ENCODE measurements at regions of chr6 and their contacts with region 1.

Region 1: GRCh38 chr6:80133020-80133419 is 26.5 kb downstream of the BCKDHB start:
- DNase-seq: peak; percentile 47
- ATAC-seq: peak; percentile 51; the same call in 1 of the 2 replicates
- H3K4me3 ChIP-seq: no peak overlapping the region
- H3K27ac ChIP-seq: no peak overlapping the region
- H3K4me1 ChIP-seq: peaks cover 6 to 9% of the 10 kb centered on the region in 2 experiments
- H3K27me3 ChIP-seq: no peaks in the 10 kb centered on the region
- CTCF ChIP-seq: peak; percentile 28 to 64 (median 54); a peak in 4 of 6 replicates
- POLR2A ChIP-seq: no peak
- RAD21 ChIP-seq: peak; percentile 84

Region 2: DNA sequence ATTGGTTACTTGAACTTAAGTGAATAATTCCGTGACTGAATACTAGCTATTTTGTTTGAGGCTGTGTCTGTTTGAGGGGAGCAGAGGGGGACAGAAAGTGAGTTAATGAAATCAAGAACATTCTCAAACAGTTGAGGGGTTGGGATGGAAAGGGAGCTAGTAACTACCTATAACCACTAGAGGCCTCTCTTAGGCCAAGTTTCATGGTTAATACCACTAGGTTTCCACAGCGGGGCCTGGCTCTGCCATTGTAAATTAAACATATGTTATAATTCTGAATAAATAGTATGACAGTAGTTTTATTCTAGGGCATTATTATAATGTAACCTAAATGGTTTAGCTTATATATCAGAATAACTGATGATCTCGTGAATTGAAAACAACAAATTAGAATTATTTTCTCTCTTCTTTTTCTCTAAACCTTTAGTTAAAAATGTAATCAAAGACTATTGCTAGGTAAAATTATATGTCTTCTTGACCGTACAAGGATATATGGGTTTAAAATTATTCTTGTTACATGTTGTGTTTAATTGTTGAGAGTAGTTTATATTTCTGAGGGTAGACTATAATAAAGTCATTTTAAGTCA is 81.5 kb after region 1 on chr6:
- CTCF ChIA-PET with region 1: no interaction called
- POLR2A ChIA-PET with region 1: no interaction called
- RAD21 ChIA-PET with region 1: no interaction called
- intact Hi-C with region 1: no loop called
- DNase-seq: peak; percentile 22
- ATAC-seq: peak; percentile 95
- H3K4me3 ChIP-seq: no peak overlapping the region
- H3K27ac ChIP-seq: no peak overlapping the region
- H3K4me1 ChIP-seq: no peaks in the 10 kb centered on the region
- H3K27me3 ChIP-seq: no peaks in the 10 kb centered on the region
- CTCF ChIP-seq: peak; percentile 39 to 76 (median 75); a peak in 4 of 6 replicates
- POLR2A ChIP-seq: no peak
- RAD21 ChIP-seq: peak; percentile 72

Region 3: GRCh38 chr6:80338201-80338836 is 205.3 kb after region 1 on chr6:
- CTCF ChIA-PET with region 1: no interaction called
- POLR2A ChIA-PET with region 1: no interaction called
- RAD21 ChIA-PET with region 1: no interaction called
- intact Hi-C with region 1: loop called (anchors 10 kb)
- DNase-seq: peak; percentile 34
- ATAC-seq: peak; percentile 90
- H3K4me3 ChIP-seq: no peak overlapping the region
- H3K27ac ChIP-seq: no peak overlapping the region
- H3K4me1 ChIP-seq: no peaks in the 10 kb centered on the region
- H3K27me3 ChIP-seq: no peaks in the 10 kb centered on the region
- CTCF ChIP-seq: peak; percentile 43 to 89 (median 87); a peak in 5 of 6 replicates
- POLR2A ChIP-seq: no peak
- RAD21 ChIP-seq: peak; percentile 66

Region 4: DNA sequence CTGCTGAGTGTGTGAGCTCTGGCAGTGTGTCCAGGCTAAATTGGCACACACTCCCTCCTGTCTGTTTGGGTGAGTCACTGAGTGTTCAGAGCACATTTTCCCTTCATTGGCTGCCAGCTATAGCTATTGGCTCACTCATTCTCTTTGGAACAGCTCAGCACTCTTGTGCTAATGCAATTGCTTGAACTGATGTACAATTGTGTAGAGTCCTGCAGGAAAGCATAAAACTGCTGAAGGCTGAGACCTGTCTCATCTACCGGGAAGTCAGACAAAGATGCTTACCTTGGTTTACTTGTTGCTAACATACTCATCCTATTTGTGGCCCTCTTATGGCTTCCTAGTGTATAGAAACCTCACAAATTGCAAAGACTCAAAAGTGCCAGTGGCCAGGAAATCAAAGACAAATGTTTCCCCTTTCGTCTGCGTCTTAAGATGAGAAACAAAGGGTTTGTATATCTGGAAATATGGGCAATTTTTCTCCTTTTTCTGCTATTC is 324.5 kb after region 1 on chr6:
- CTCF ChIA-PET with region 1: no interaction called
- POLR2A ChIA-PET with region 1: no interaction called
- RAD21 ChIA-PET with region 1: no interaction called
- intact Hi-C with region 1: loop called (anchors 5 kb)
- DNase-seq: peak; percentile 38
- ATAC-seq: peak; percentile 86
- H3K4me3 ChIP-seq: no peak overlapping the region
- H3K27ac ChIP-seq: no peak overlapping the region
- H3K4me1 ChIP-seq: peaks cover 0 to 31% of the 10 kb centered on the region in 2 experiments; a peak in 2 of 4 replicates
- H3K27me3 ChIP-seq: no peaks in the 10 kb centered on the region
- CTCF ChIP-seq: peak; percentile 14 to 52 (median 48); a peak in 4 of 6 replicates
- POLR2A ChIP-seq: no peak
- RAD21 ChIP-seq: no peak

Region 5: GRCh38 chr6:81241126-81242041 is 1108.4 kb after region 1 on chr6:
- CTCF ChIA-PET with region 1: no interaction called
- POLR2A ChIA-PET with region 1: no interaction called
- RAD21 ChIA-PET with region 1: no interaction called
- intact Hi-C with region 1: loop called (anchors 5 kb)
- DNase-seq: peak; percentile 27
- ATAC-seq: no peak
- H3K4me3 ChIP-seq: no peak overlapping the region
- H3K27ac ChIP-seq: no peak overlapping the region
- H3K4me1 ChIP-seq: no peaks in the 10 kb centered on the region
- H3K27me3 ChIP-seq: no peaks in the 10 kb centered on the region
- CTCF ChIP-seq: peak; percentile 37 to 56 (median 54); a peak in 5 of 6 replicates
- POLR2A ChIP-seq: no peak
- RAD21 ChIP-seq: peak; percentile 66

Region 6: DNA sequence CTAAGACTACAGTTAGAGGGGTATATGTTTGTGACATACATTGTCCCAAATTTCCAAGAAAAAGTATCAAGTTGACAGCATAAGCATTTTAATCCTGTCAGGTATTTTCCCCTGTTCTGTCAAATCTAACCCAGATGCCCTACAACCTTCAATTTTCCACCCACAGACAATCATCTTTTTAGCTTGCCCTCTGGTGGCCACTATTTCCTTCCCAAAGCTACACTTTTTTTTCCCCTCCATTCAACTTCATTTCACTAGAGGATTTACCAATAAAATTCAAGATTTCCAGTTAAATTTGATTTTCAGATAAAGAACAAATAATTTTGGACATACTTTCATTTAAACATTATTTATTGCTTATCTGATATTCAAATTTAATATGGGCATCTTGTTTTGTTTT is 1332.8 kb after region 1 on chr6:
- CTCF ChIA-PET with region 1: no interaction called
- POLR2A ChIA-PET with region 1: no interaction called
- RAD21 ChIA-PET with region 1: no interaction called
- intact Hi-C with region 1: loop called (anchors 10 kb)
- DNase-seq: peak; percentile 37
- ATAC-seq: peak; percentile 50
- H3K4me3 ChIP-seq: no peak overlapping the region
- H3K27ac ChIP-seq: no peak overlapping the region
- H3K4me1 ChIP-seq: no peaks in the 10 kb centered on the region
- H3K27me3 ChIP-seq: no peaks in the 10 kb centered on the region
- CTCF ChIP-seq: peak; percentile 60 to 72 (median 68); a peak in 5 of 6 replicates
- POLR2A ChIP-seq: no peak
- RAD21 ChIP-seq: peak; percentile 66

Region 7: DNA sequence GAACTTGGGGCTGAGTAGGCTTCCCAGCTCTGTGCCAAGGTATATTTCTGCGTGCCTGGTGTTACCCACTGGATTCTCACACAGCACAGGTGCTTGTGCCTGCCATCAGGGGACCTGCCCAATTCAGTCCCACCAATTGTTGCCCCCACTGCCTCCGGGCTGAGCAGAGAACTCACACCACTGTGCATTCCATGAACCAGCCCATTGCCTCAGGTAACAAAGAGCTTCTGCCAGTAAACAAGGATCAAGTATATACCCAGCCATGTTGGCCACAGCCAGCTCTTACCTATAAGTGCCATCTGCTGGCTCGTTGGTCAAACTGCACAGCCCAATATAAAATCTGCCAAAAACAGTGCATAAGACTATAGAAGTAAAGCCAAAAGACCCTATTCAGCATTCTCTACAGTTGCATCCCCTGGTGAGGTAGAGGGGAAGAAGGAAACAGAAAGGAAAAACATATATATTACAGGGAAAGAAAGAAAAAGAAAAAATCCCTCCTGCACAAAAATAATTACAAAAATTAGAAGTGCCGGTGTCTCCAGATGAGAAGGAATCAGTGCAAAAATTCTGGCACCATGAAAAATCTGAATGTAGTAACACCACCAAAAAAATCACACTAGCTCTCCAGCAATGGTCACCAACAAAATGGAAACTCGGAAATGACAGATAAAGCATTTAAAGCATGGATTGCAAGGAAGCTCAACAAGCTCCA is 1873.2 kb after region 1 on chr6:
- CTCF ChIA-PET with region 1: no interaction called
- POLR2A ChIA-PET with region 1: no interaction called
- RAD21 ChIA-PET with region 1: no interaction called
- intact Hi-C with region 1: loop called (anchors 10 kb)
- DNase-seq: no peak
- ATAC-seq: peak; percentile 90
- H3K4me3 ChIP-seq: no peak overlapping the region
- H3K27ac ChIP-seq: no peak overlapping the region
- H3K4me1 ChIP-seq: no peaks in the 10 kb centered on the region
- H3K27me3 ChIP-seq: no peaks in the 10 kb centered on the region
- CTCF ChIP-seq: peak; percentile 45 to 75 (median 73); a peak in 5 of 6 replicates
- POLR2A ChIP-seq: no peak
- RAD21 ChIP-seq: peak; percentile 83

Measured in HCT116 (cell line).